ENCODE measurements at regions of chr4 and their contacts with region 1.

Region 1: GRCh38 chr4:14871676-14872430 is 130.4 kb upstream of the CPEB2 start:
- DNase-seq: peak in 24 of 35 experiments; percentile 2 to 45 (median 18)
- ATAC-seq: no peak
- H3K4me3 ChIP-seq: no peak overlapping the region
- H3K4me3 Mint-ChIP-seq: no peak overlapping the region
- H3K27ac ChIP-seq: no peak overlapping the region
- H3K27ac Mint-ChIP-seq: no peak overlapping the region
- H3K4me1 ChIP-seq: peaks cover 6 to 8% of the 10 kb centered on the region in 2 experiments
- H3K4me1 Mint-ChIP-seq: peaks cover 6 to 16% (median 7%) of the 10 kb centered on the region in 3 donors
- H3K27me3 ChIP-seq: no peaks in the 10 kb centered on the region
- H3K27me3 Mint-ChIP-seq: peaks cover 5 to 18% of the 10 kb centered on the region in 2 donors

Region 2: DNA sequence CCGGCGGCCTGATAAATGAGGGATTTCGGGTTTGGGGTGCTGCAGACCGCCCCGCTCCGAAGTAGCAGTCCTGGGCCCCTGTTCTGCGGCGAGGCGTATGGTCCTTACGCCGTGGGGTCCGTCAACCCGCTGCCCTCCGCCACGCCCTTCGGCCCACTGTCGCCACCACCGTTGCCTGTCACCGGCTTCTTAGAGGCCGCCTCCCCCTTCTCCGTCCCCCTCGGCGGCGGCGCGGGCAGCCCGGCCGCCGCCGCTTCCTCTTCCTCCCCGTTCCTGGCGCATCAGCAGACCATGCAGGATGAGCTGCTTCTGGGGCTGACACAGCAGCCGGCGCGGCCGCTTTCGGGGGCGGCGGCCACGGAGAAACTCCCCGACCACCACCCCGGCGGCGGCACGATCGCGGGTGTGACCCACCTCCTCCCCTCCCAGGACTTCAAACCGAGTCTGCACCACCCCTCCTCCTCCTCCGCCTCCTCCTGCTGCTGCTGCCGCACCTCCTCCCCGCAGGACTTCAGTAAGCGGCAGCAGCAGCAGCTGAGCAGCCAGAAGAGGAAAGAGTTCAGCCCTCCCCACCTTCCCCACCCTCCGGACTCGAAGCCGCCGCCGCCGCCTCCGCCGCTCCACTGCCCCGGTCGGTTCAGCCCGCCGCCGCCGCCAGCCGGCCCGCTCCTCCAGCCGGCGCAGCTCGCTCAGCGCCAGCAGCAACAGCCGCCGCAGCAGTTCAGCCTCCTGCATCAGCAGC is 131.0 kb after region 1 on chr4:
- CTCF ChIA-PET with region 1: interaction called, 3 to 10 read pairs
- POLR2A ChIA-PET with region 1: no interaction called
- DNase-seq: peak; percentile 62 to 93 (median 77)
- ATAC-seq: peak; percentile 32 to 47 (median 35)
- H3K4me3 ChIP-seq: peak overlapping the region; percentile 82 to 100
- H3K4me3 Mint-ChIP-seq: peak overlapping the region; percentile 90 to 93 (median 91)
- H3K27ac ChIP-seq: peak overlapping the region; percentile 100
- H3K27ac Mint-ChIP-seq: peak overlapping the region; percentile 92 to 94
- H3K4me1 ChIP-seq: peaks cover 5 to 11% of the 10 kb centered on the region in 2 experiments
- H3K4me1 Mint-ChIP-seq: peaks cover 18 to 29% (median 24%) of the 10 kb centered on the region in 3 donors
- H3K27me3 ChIP-seq: no peaks in the 10 kb centered on the region
- H3K27me3 Mint-ChIP-seq: no peaks in the 10 kb centered on the region

Measured in T-cell (primary cell).